ENCODE measurements at regions of chr5 and their contacts with region 1.

Region 1: GRCh38 chr5:6492934-6493333 is 44.3 kb downstream of the UBE2QL1 start:
- DNase-seq: no peak
- H3K4me3 ChIP-seq: no peak overlapping the region
- H3K27ac ChIP-seq: no peak overlapping the region
- H3K4me1 ChIP-seq: peaks cover 49% of the 10 kb centered on the region
- H3K27me3 ChIP-seq: no peaks in the 10 kb centered on the region
- CTCF ChIP-seq: no peak

Region 2: GRCh38 chr5:6251565-6252102 is 241.3 kb before region 1 on chr5:
- intact Hi-C with region 1: loop called (anchors 5 kb)
- DNase-seq: no peak
- H3K4me3 ChIP-seq: no peak overlapping the region
- H3K27ac ChIP-seq: no peak overlapping the region
- H3K4me1 ChIP-seq: no peaks in the 10 kb centered on the region
- H3K27me3 ChIP-seq: peaks cover 10% of the 10 kb centered on the region
- CTCF ChIP-seq: no peak